Ascending aorta (tissue), 2 donors: ENCODE measurements at regions of chr19 and their contacts with region 1.

Region 1: GRCh38 chr19:18007044-18007916 is 690 bp upstream of the ARRDC2 start:
- DNase-seq: peak in 1 of 2 donors; percentile 88
- H3K4me3 ChIP-seq: peak overlapping the region; percentile 50 to 78
- H3K27ac ChIP-seq: peak overlapping the region; percentile 71 to 88
- H3K4me1 ChIP-seq: peaks cover 7 to 11% of the 10 kb centered on the region in 2 donors
- H3K27me3 ChIP-seq: no peaks in the 10 kb centered on the region
- CTCF ChIP-seq: peak; percentile 87 to 99 (median 99)

Region 2: GRCh38 chr19:18021121-18021755 is 14.0 kb after region 1 on chr19:
- intact Hi-C with region 1: loop called (anchors 2 kb)
- DNase-seq: peak; percentile 75 to 95
- H3K4me3 ChIP-seq: peak overlapping the region; percentile 11 to 26
- H3K27ac ChIP-seq: peak overlapping the region; percentile 89 to 90
- H3K4me1 ChIP-seq: peaks cover 38 to 71% of the 10 kb centered on the region in 2 donors
- H3K27me3 ChIP-seq: no peaks in the 10 kb centered on the region
- CTCF ChIP-seq: no peak

Region 3: GRCh38 chr19:18058208-18059030 is 51.1 kb after region 1 on chr19:
- intact Hi-C with region 1: loop called (anchors 1 kb)
- DNase-seq: peak in 1 of 2 donors; percentile 85
- H3K4me3 ChIP-seq: peak overlapping the region; percentile 10 to 17
- H3K27ac ChIP-seq: peak overlapping the region; percentile 73 to 90
- H3K4me1 ChIP-seq: peaks cover 0 to 14% of the 10 kb centered on the region in 2 donors
- H3K27me3 ChIP-seq: no peaks in the 10 kb centered on the region
- CTCF ChIP-seq: peak; percentile 93 to 99 (median 97)

Region 4: GRCh38 chr19:18100710-18101109 is 93.4 kb after region 1 on chr19:
- intact Hi-C with region 1: loop called (anchors 5 kb)
- DNase-seq: no peak
- H3K4me3 ChIP-seq: no peak overlapping the region
- H3K27ac ChIP-seq: no peak overlapping the region
- H3K4me1 ChIP-seq: peaks cover 9 to 35% of the 10 kb centered on the region in 2 donors
- H3K27me3 ChIP-seq: no peaks in the 10 kb centered on the region
- CTCF ChIP-seq: no peak

Region 5: DNA sequence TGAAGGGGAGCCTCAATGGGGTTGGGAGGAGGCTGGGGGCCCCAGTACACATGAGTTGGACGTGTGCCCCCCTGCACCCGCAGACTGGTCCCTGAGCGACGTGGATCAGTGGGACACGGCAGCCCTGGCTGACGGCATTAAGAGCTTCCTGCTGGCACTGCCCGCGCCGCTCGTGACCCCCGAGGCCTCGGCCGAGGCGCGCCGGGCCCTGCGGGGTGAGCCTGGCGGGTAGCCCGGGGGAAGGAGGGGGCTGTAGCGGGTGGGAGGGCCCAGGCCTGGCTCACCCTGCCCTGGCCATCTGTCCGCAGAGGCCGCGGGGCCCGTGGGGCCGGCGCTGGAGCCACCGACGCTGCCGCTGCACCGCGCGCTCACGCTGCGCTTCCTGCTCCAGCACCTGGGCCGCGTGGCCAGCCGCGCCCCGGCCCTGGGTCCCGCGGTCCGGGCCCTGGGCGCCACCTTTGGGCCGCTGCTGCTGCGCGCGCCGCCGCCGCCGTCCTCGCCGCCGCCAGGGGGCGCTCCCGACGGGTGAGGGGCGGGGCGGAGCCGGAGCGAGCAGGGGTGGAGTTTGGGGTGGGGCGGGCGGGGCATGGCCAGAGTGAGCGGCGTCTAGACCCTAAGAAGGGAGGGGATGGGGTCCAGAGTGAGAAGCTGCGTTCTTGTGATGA is 153.8 kb after region 1 on chr19:
- intact Hi-C with region 1: loop called (anchors 2 kb)
- DNase-seq: peak in 1 of 2 donors; percentile 76
- H3K4me3 ChIP-seq: peak overlapping the region; percentile 50 to 67
- H3K27ac ChIP-seq: peak overlapping the region; percentile 85
- H3K4me1 ChIP-seq: peaks cover 13 to 29% of the 10 kb centered on the region in 2 donors
- H3K27me3 ChIP-seq: no peaks in the 10 kb centered on the region
- CTCF ChIP-seq: peak; percentile 37 to 88 (median 46)